ENCODE measurements at regions of chr17 and their contacts with region 1.

Region 1: GRCh38 chr17:81927653-81928543 is at the start of gene MAFG:
- DNase-seq: peak; percentile 94
- ATAC-seq: peak; percentile 62
- H3K4me3 Mint-ChIP-seq: peak within 1 kb of the TSS; percentile 85
- H3K27ac Mint-ChIP-seq: peak within 1 kb of the TSS; percentile 85
- H3K4me1 Mint-ChIP-seq: peaks cover 32% of the 10 kb centered on the region
- H3K27me3 Mint-ChIP-seq: peaks cover 2% of the 10 kb centered on the region
- total RNA-seq, gene MAFG: 15.3 to 18.3 TPM

Region 2: GRCh38 chr17:81346090-81346907 is 581.6 kb before region 1 on chr17:
- CTCF ChIA-PET with region 1: no interaction called
- POLR2A ChIA-PET with region 1: no interaction called
- intact Hi-C with region 1: no loop called
- DNase-seq: peak; percentile 98
- ATAC-seq: peak; percentile 93
- H3K4me3 Mint-ChIP-seq: peak overlapping the region; percentile 26
- H3K27ac Mint-ChIP-seq: no peak overlapping the region
- H3K4me1 Mint-ChIP-seq: peaks cover 19% of the 10 kb centered on the region
- H3K27me3 Mint-ChIP-seq: peaks cover 25% of the 10 kb centered on the region

Region 3: DNA sequence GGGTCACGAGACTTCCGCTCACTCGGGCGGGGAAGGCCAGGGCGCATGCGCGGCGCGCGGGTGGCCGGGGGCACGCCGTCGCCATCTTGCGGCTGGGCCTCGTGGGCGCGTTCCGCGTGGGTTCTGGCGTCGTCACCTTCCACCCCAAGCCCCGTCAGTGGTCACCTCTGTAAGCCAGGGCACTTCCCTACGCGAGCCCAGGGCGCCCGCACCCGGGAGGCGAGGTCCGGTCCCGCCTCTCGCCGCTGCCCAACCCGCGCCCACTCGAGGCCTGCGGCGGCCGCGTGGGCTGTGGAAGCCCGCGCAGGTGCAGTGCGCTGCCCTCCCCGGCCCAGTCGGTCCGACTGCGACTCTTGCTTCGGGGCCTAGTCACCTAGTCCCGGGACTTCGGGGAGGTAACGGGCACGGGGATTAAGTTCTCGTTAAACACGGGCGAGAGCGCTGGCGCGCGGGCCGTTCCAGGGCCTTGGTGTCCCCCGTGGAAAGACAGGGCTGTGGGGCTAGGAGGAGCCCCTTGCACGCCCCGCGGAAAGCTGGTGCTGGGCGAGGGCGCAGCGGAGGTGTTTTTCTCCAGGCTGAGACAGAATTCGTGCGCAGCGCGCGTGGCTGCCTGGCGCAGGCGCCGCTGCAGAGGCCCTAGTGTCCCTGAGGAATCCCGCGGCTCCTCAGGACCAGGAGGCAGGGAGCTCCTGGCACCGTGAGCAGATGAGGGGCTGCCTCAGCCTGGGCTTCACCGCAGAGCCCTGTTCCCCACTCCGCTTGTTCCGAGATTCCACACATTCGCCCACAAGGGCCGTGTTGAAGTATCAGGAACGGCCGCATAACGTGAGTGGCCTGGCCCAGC is 56.3 kb before region 1 on chr17:
- CTCF ChIA-PET with region 1: no interaction called
- POLR2A ChIA-PET with region 1: interaction called, 3 read pairs
- intact Hi-C with region 1: loop called in 1 of 2 experiments (anchors 1 kb)
- DNase-seq: peak; percentile 98
- ATAC-seq: no peak
- H3K4me3 Mint-ChIP-seq: peak overlapping the region; percentile 81
- H3K27ac Mint-ChIP-seq: peak overlapping the region; percentile 92
- H3K4me1 Mint-ChIP-seq: peaks cover 34% of the 10 kb centered on the region
- H3K27me3 Mint-ChIP-seq: no peaks in the 10 kb centered on the region

Region 4: DNA sequence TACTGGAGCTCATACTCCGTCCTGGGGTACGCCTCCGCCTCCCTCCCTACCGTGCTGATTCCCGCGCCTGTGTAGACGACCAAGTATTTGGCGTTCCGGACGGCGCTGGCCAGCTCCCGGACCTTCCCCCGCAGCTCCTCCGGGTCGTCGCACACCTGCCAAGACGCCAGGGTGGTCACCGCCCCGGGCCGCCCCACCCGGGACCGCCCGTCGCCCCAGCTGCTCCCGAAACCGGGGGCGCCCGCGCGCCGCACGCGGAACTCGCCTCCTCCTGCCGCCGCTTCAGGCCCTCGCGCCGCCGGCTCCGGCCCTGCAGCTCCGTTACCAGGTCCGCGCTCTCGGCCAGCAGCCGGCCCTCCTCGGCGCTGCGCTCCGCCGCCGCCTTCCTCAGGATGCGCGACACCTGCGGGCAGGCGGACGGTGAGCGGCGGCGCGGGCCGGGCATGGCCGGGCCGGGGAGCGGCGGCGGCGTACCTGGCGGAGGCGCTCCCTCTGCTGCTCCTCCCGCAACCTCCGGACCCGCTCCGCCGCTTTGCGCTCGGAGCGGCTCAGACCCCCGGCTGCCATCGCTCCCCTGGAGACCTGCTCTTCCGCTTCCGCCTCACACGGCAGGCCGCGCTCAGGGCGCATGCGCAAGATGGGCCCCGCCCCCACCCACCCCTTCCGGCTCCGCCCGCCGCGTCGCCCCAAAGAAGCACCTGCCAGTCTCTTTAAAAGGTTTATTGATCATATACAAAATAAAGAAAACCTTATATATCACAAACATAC is 10.1 kb before region 1 on chr17 and contains the start of gene SIRT7:
- CTCF ChIA-PET with region 1: interaction called, 3 read pairs
- POLR2A ChIA-PET with region 1: no interaction called
- intact Hi-C with region 1: loop called in 1 of 2 experiments (anchors 1 kb)
- DNase-seq: peak; percentile 90
- ATAC-seq: peak; percentile 87
- H3K4me3 Mint-ChIP-seq: peak within 1 kb of the TSS; percentile 85
- H3K27ac Mint-ChIP-seq: peak within 1 kb of the TSS; percentile 82
- H3K4me1 Mint-ChIP-seq: peaks cover 23% of the 10 kb centered on the region
- H3K27me3 Mint-ChIP-seq: no peaks in the 10 kb centered on the region
- total RNA-seq, gene SIRT7: 29.3 to 31.8 TPM

Region 5: GRCh38 chr17:81967533-81968395 is 39.9 kb after region 1 on chr17:
- CTCF ChIA-PET with region 1: interaction called, 3 read pairs
- POLR2A ChIA-PET with region 1: interaction called, 3 read pairs
- intact Hi-C with region 1: loop called in 1 of 2 experiments (anchors 2 kb)
- DNase-seq: peak; percentile 95
- ATAC-seq: peak; percentile 95
- H3K4me3 Mint-ChIP-seq: peak overlapping the region; percentile 60
- H3K27ac Mint-ChIP-seq: peak overlapping the region; percentile 88
- H3K4me1 Mint-ChIP-seq: peaks cover 15% of the 10 kb centered on the region
- H3K27me3 Mint-ChIP-seq: no peaks in the 10 kb centered on the region

Region 6: DNA sequence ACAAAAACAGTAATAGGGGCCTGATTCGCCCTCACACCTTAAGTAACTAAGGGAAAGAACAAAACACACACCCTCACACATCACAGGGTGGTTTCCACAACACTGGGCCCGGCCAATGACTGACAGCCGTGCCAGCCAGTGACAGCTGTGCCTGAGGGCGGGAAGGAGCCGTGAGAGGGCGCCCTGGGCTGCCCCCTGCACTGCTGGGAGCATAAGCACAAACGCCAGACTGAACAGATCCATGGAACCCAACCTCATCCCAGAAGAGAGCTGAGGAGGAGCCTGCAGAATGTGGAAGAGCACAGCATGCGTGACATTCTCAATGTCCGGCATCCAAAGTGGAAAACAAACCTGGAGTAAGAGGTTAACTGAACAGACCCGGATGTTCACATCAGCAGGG is 329.6 kb after region 1 on chr17:
- CTCF ChIA-PET with region 1: no interaction called
- POLR2A ChIA-PET with region 1: no interaction called
- intact Hi-C with region 1: no loop called
- DNase-seq: peak; percentile 81
- ATAC-seq: peak; percentile 98
- H3K4me3 Mint-ChIP-seq: no peak overlapping the region
- H3K27ac Mint-ChIP-seq: peak overlapping the region; percentile 83
- H3K4me1 Mint-ChIP-seq: peaks cover 24% of the 10 kb centered on the region
- H3K27me3 Mint-ChIP-seq: no peaks in the 10 kb centered on the region